GM18951 (cell line): ENCODE measurements at regions of chr9 and their contacts with region 1.

Region 1: GRCh38 chr9:73104921-73105320 is 46.7 kb upstream of the ANXA1 start:
- POLR2A ChIP-seq: no peak

Region 2: GRCh38 chr9:72102520-72102919 is 1002.4 kb before region 1 on chr9:
- in situ Hi-C with region 1: no loop called
- POLR2A ChIP-seq: no peak

Region 3: GRCh38 chr9:73183917-73184861 is 79.3 kb after region 1 on chr9:
- in situ Hi-C with region 1: loop called (anchors 5 kb)
- POLR2A ChIP-seq: no peak

Region 4: DNA sequence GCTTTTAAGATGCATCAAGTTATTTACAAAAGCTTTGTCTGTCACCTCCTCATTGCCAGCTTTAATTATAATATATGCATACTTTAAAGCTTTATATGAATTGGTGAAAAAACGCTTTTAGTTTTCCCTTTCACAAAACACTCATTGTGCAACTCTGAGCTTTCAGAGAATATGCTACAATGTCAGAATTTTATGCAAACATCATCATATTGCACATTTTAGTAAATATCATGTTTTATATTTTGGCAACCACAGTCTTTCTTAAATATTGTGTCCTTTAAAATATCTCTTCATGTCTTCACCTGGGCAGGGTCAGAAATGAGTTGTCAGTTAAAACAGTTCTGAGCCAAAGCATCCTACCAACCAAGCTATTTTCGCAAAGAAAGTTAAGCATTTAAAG is 791.1 kb after region 1 on chr9:
- in situ Hi-C with region 1: no loop called
- POLR2A ChIP-seq: no peak